Right cardiac atrium (tissue), 5 donors: ENCODE measurements at regions of chr5 and their contacts with region 1.

Region 1: GRCh38 chr5:73638344-73639095 is 12.5 kb downstream of the ARHGEF28 start:
- DNase-seq: no peak
- ATAC-seq: no peak
- H3K4me3 ChIP-seq: no peak overlapping the region
- H3K27ac ChIP-seq: no peak overlapping the region
- H3K4me1 ChIP-seq: no peaks in the 10 kb centered on the region
- H3K27me3 ChIP-seq: no peaks in the 10 kb centered on the region

Region 2: DNA sequence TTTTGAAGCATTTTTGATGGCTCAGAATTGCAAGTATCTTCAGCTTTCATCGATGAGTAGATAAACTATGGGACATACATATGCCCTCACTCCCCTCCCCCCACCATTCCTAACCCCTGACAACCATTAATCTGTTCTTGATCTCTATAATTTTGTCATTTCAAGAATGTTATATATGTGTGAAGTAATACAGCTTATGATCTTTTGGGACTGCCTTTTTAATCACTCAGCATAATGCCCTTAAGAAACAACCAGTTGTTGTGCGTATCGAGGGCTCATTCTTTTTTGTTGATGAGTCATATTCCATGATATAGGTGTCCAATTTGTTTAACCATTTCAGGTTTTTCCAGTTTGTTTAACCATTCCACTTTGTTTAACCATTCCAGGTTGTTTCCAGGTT is 63.0 kb after region 1 on chr5:
- intact Hi-C with region 1: no loop called
- DNase-seq: no peak
- ATAC-seq: no peak
- H3K4me3 ChIP-seq: no peak overlapping the region
- H3K27ac ChIP-seq: no peak overlapping the region
- H3K4me1 ChIP-seq: no peaks in the 10 kb centered on the region
- H3K27me3 ChIP-seq: no peaks in the 10 kb centered on the region

Region 3: GRCh38 chr5:73759771-73760170 is 121.3 kb after region 1 on chr5:
- intact Hi-C with region 1: loop called in 1 of 4 experiments (anchors 5 kb)
- DNase-seq: no peak
- ATAC-seq: no peak
- H3K4me3 ChIP-seq: no peak overlapping the region
- H3K27ac ChIP-seq: no peak overlapping the region
- H3K4me1 ChIP-seq: no peaks in the 10 kb centered on the region
- H3K27me3 ChIP-seq: no peaks in the 10 kb centered on the region

Region 4: GRCh38 chr5:73985145-73985544 is 346.6 kb after region 1 on chr5:
- intact Hi-C with region 1: no loop called
- DNase-seq: peak in 1 of 3 donors; percentile 56
- ATAC-seq: peak; percentile 57 to 87
- H3K4me3 ChIP-seq: no peak overlapping the region
- H3K27ac ChIP-seq: no peak overlapping the region
- H3K4me1 ChIP-seq: no peaks in the 10 kb centered on the region
- H3K27me3 ChIP-seq: no peaks in the 10 kb centered on the region